Posterior cingulate gyrus (tissue), 11 donors: ENCODE measurements at regions of chr15 and their contacts with region 1.

Region 1: DNA sequence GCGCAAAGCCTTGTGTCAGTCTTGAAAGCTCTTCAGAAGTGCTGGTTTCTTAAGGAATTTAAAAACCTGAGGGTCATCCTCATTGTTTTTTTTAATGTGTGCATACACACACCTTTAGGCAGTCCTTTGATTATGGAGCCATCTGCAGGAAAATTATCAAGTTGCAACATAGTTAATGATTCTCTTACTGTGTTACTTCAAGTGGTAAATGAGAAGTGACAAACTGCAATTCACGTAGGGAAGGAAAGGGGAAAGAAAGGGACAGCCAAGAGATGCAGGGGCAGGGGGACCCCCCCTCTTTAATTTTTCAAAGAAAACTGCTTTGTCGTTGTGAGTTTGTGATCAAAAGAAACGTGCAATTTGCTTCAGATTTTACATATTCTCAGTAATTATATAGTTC is 162.4 kb upstream of the CGNL1 start:
- DNase-seq: no peak

Region 2: DNA sequence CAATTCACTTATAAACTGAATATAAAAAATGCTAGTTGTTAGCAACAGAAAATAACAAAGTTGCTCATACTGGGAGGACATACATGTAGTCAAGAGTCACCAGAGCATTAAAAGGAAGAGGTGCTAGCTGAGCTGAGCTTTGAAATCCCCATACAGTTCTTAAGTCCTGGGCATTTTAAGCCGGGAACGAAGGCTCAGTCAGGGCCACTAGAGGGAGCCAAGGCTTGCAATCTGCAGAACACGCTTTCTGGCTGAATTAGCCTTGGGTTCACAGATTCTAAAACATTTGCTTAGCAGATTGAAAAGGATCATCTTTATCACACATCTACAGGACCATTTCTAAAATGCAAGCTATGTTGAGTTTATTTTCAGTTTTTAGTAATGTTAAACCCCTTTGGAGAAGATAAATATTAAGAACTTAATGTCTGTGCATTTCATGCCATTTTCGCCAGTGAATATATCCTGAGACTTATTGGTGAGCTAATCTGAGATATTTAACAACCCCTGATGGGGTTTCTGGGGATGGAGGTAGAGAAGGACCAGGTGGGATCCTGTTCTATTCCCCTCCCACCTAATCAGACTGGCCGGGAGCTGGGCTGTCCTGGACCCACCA is 722.6 kb before region 1 on chr15:
- intact Hi-C with region 1: loop called (anchors 5 kb)
- DNase-seq: peak; percentile 55 to 96 (median 78)

Region 3: DNA sequence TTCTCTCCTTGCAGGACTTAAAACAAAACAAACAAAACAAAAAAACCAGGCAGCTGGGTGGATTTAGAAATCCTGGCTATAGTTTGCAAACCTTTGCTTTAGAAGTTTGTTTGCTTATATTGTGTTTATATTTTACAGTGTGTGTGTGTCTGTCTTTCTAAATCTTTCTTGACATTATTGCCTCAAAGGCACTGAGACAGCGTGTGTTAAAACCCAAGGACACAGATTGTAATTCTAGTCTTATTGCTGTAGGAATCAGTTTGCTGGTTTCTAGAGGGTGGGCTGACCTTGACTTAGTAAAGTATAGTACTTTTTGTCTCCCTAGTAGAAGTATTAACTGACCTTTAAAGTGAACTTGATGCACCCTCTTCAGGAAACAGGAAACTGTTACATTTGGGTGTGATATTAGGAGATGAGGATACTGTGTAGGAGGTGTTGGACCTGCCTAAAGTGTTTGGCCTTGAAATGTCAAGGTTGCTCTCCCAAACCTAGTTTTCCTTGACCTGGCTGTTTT is 224.4 kb before region 1 on chr15:
- intact Hi-C with region 1: no loop called
- DNase-seq: no peak

Region 4: GRCh38 chr15:57017024-57017423 is 196.8 kb before region 1 on chr15:
- intact Hi-C with region 1: loop called (anchors 10 kb)
- DNase-seq: no peak

Region 5: GRCh38 chr15:57045741-57046382 is 168.0 kb before region 1 on chr15:
- intact Hi-C with region 1: no loop called
- DNase-seq: no peak

Region 6: GRCh38 chr15:57146506-57147201 is 67.2 kb before region 1 on chr15:
- intact Hi-C with region 1: loop called (anchors 1 kb)
- DNase-seq: no peak

Region 7: GRCh38 chr15:57298843-57299550 is 85.1 kb after region 1 on chr15:
- intact Hi-C with region 1: no loop called
- DNase-seq: no peak